ENCODE measurements at regions of chr1 and their contacts with region 1.

Region 1: DNA sequence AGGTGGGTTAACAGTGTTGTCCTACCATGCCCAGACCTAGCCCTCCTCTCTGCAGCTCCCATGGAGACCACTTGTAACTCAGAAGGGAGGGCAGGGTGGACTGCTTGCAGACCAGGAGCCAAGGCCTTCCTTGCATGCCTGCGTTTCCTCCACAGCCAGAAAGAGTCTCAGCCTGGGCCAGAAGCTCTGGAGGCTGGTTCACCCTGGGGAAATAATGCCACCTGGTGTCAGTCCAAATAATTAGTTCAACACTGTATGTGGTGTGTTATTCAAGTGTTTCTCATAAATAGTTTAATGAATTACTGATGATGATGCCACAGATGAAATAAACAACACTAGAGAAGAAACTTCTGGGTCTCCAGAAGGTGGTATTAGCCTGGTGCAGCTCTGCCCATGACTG is 16.9 kb upstream of the VANGL1 start:
- DNase-seq: no peak
- ATAC-seq: no peak
- H3K4me3 ChIP-seq: no peak overlapping the region
- H3K27ac ChIP-seq: no peak overlapping the region
- H3K4me1 ChIP-seq: no peaks in the 10 kb centered on the region
- H3K27me3 ChIP-seq: peaks cover 10% of the 10 kb centered on the region
- CTCF ChIP-seq: no peak
- POLR2A ChIP-seq: no peak
- RAD21 ChIP-seq: no peak

Region 2: GRCh38 chr1:115679141-115679611 is 54.3 kb after region 1 on chr1:
- CTCF ChIA-PET with region 1: interaction called, 13 read pairs
- POLR2A ChIA-PET with region 1: no interaction called
- dilution Hi-C with region 1: no loop called
- in situ Hi-C with region 1: no loop called
- intact Hi-C with region 1: no loop called
- DNase-seq: peak; percentile 72
- ATAC-seq: peak; percentile 100
- H3K4me3 ChIP-seq: no peak overlapping the region
- H3K27ac ChIP-seq: no peak overlapping the region
- H3K4me1 ChIP-seq: peaks cover 9% of the 10 kb centered on the region
- H3K27me3 ChIP-seq: no peaks in the 10 kb centered on the region
- CTCF ChIP-seq: no peak
- POLR2A ChIP-seq: no peak
- RAD21 ChIP-seq: no peak

Measured in IMR-90 (cell line).